Calu3 (cell line): ENCODE measurements at regions of chr1 and their contacts with region 1.

Region 1: DNA sequence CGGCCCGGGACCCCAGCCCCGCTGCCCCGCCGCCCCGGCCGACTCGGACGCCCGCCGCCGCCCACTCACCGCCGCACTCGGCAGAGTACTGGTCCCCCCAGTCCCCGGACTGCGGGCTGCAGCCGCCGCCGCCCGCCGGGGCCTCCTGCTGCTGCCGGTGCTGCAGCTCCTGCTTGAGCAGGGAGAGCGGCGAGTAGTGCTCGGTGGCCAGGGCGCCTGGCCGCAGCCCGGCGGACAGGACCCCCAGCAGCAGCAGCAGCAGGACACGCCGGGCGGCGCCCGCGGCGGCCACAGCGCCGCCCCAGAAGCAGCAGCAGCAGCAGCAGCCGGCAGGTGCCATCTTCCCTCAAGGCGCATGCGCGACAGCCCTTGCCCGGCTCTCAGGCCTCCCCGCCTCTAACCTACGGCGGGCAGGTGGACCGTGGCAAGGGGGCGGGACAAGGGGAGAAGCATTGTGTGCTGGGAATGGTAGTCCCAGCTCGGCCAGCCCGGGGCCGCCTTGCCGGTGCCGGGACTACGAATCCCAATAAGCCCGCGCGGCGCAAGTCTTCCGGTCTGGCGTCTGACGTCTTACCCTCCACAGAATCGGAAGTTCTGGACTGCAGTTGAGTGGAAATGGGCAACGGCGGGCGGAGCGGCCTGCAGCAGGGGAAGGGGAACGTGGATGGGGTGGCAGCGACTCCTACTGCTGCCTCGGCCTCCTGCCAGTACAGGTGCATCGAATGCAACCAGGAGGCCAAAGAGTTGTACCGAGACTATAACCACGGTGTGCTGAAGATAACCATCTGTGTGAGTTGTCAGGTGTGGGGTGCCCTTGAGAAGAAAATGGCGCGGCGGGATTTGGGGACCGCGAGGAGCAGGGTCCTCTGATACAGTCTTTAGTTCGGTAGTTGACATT is at the starts of genes ARV1 and TTC13:
- DNase-seq: peak; percentile 100
- H3K4me3 Mint-ChIP-seq: no peak within 1 kb of the TSS
- H3K27ac Mint-ChIP-seq: peak within 1 kb of the TSS; percentile 88
- H3K4me1 Mint-ChIP-seq: no peaks in the 10 kb centered on the region
- H3K27me3 Mint-ChIP-seq: no peaks in the 10 kb centered on the region
- CTCF ChIP-seq: peak; percentile 34
- total RNA-seq, gene ARV1: 17.1 and 19.4 TPM in 2 replicates
- total RNA-seq, gene TTC13: 29.0 and 35.6 TPM in 2 replicates

Region 2: GRCh38 chr1:230867903-230868735 is 110.6 kb before region 1 on chr1 and contains the start of gene C1orf198:
- CTCF ChIA-PET with region 1: interaction called, 3 read pairs
- intact Hi-C with region 1: loop called (anchors 5 kb)
- DNase-seq: peak; percentile 88
- H3K4me3 Mint-ChIP-seq: peak within 1 kb of the TSS; percentile 86
- H3K27ac Mint-ChIP-seq: peak within 1 kb of the TSS; percentile 97
- H3K4me1 Mint-ChIP-seq: peaks cover 50% of the 10 kb centered on the region
- H3K27me3 Mint-ChIP-seq: no peaks in the 10 kb centered on the region
- CTCF ChIP-seq: no peak
- total RNA-seq, gene C1orf198: 77.2 and 80.4 TPM in 2 replicates

Region 3: GRCh38 chr1:230917284-230918135 is 61.2 kb before region 1 on chr1:
- CTCF ChIA-PET with region 1: no interaction called
- intact Hi-C with region 1: loop called (anchors 2 kb)
- DNase-seq: peak; percentile 80
- H3K4me3 Mint-ChIP-seq: no peak overlapping the region
- H3K27ac Mint-ChIP-seq: no peak overlapping the region
- H3K4me1 Mint-ChIP-seq: no peaks in the 10 kb centered on the region
- H3K27me3 Mint-ChIP-seq: no peaks in the 10 kb centered on the region
- CTCF ChIP-seq: peak; percentile 61

Region 4: DNA sequence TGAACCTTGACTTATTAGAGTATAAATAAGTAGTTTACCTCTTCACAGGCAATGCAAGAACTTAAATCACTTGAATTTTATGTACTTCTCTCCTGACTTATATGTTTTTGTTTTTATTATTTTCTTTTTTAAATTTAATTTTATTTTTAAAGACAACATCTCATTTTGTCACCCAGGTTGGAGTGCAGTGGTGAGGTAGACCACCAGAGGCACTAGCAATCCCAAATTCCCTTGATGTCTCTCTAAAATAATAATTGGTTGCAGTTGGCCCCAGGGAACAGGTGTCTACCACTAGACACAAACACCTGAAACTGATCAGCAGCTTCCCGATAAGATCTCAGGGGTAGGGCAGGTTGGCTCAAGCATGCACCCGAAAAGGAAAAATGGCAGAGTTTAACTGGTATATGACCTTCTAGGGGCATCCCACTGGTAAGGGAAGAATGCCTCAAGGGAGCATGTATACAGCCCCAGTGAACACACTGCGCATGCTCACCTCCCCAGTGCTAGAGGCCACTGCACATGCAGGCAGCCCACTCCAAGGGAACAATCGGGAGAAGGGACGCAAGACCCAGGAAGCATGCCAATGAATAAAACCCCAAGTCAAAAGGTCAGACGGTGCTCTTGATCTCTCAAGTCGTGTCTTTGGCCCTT is 344.3 kb after region 1 on chr1:
- CTCF ChIA-PET with region 1: no interaction called
- intact Hi-C with region 1: loop called (anchors 10 kb)
- DNase-seq: no peak
- H3K4me3 Mint-ChIP-seq: no peak overlapping the region
- H3K27ac Mint-ChIP-seq: no peak overlapping the region
- H3K4me1 Mint-ChIP-seq: no peaks in the 10 kb centered on the region
- H3K27me3 Mint-ChIP-seq: no peaks in the 10 kb centered on the region
- CTCF ChIP-seq: peak; percentile 32